ENCODE measurements at regions of chr15 and their contacts with region 1.

Region 1: GRCh38 chr15:101288908-101289513 is 6.0 kb downstream of the SNRPA1 start:
- DNase-seq: peak; percentile 53

Region 2: DNA sequence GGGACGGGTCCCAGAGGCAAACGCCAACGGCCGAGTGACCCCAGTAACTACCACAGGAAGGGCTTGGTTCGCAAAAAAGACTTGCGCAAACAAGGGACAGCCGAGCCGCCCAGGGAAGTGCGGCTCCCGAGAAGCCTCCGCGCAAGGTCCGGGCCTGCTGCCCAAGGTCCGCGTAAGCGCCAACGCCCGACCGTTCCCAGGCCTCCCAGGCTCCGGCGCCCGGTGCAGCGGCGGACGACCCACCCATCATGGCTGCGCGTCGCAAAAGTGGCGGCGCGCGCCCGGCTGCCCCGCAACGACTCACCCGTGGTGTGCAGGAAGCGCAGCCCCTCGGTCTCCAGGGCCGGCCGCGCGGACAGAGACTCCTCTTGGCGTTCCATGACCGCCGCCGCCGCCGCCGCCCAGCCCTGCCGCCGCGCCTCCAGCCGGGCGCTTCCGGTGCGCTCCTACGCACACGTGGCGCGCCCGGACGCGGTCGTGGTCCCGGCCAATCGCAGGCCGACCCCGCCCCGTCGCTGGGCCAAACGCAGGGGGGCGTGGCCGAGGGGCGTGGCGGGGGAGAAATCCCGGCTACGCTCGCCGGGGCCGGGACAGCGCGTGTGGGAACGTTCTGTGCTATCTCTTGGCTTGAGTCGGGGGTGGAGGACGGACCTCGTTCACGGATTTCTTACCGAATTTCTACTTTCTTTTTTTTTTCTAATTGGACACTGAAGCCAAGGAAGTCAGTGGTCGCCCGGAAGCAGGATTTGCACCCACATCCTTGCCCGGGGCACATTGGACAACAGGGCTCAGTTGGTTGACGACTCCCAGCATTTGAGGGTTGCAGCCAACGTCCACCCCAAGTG is 11.8 kb before region 1 on chr15 and contains the start of gene SELENOS:
- CTCF ChIA-PET with region 1: interaction called, 21 read pairs
- POLR2A ChIA-PET with region 1: no interaction called
- DNase-seq: peak; percentile 96

Region 3: GRCh38 chr15:101528108-101528916 is 239.3 kb after region 1 on chr15:
- CTCF ChIA-PET with region 1: no interaction called
- POLR2A ChIA-PET with region 1: no interaction called
- DNase-seq: no peak